Endothelial cell of umbilical vein (primary cell): ENCODE measurements at regions of chr17 and their contacts with region 1.

Region 1: DNA sequence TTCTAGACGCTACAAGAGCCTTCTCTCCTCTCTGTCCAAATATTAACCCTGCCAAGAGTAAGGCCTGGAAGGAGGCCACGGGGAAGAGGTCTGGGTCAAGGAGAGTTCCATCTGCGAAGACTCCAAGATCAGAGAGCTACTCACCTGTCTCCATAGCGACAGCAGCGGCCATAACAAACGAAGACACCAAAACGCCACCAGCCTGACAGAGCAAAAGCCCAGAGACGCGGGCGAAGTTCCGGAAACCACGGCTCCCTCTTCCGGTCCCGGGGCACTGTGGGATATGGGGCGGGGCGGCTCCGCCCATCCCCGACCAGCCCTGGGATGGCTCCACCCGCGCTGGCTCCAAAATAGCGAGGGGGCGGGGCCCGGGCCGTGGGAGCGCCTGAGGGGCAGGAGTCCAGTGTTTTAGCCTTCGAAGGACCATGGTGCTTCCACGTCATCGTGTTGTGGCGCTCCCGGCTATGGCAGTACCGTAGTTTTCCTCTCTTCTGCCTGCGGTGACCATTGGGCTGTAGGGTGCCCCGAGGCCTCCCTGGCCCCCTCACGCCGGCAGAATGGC is at the starts of genes C17orf100 and MED31:
- DNase-seq: peak; percentile 88
- H3K4me3 ChIP-seq: peak within 1 kb of the TSS; percentile 94 to 99 (median 96)
- H3K27ac ChIP-seq: peak within 1 kb of the TSS; percentile 98
- H3K4me1 ChIP-seq: peaks cover 12% of the 10 kb centered on the region
- H3K27me3 ChIP-seq: peaks cover 31 to 38% of the 10 kb centered on the region in 2 experiments
- CTCF ChIP-seq: no peak
- POLR2A ChIP-seq: peak; percentile 95
- total RNA-seq, gene C17orf100: 1.4 and 1.6 TPM in 2 replicates
- total RNA-seq, gene MED31: 28.0 and 29.4 TPM in 2 replicates

Region 2: DNA sequence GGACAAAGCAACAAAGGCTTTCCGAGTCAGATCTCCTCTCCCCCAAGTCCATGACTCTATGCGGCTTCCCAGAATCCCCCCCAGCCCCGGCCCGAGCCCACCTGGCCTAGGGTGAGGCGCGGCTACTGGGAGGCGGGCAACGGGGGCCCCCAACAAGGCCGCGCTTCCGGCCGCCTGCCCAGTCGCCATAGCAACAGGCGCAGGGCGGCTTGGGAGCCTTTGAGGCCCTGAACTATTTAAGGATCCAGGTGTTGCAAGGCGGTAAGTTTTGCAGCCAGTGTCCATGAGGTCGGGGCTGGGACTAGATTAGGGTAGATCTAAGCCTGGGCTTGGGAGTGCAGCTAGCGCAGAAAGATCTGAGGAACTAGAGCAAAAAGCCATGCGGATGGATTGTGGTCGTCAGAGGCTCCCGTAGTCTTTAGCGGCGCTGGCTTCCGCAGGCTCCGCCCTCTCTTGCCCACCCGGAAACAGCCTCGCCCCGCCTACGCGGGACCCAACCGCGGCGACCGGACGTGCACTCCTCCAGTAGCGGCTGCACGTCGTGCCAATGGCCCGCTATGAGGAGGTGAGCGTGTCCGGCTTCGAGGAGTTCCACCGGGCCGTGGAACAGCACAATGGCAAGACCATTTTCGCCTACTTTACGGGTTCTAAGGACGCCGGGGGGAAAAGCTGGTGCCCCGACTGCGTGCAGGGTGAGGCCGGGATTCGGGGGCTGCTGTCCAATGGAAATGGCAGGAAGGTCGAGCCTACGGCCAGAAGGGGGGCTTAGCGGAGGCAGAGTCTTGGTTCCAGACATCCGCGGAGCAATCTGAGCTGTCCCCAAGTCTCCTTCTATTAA is 10.7 kb before region 1 on chr17 and contains the starts of genes KIAA0753 and TXNDC17:
- CTCF ChIA-PET with region 1: no interaction called
- POLR2A ChIA-PET with region 1: no interaction called
- dilution Hi-C with region 1: no loop called
- intact Hi-C with region 1: loop called (anchors 1 kb)
- DNase-seq: peak; percentile 96
- H3K4me3 ChIP-seq: peak within 1 kb of the TSS; percentile 44 to 86 (median 70)
- H3K27ac ChIP-seq: peak within 1 kb of the TSS; percentile 83
- H3K4me1 ChIP-seq: peaks cover 15% of the 10 kb centered on the region
- H3K27me3 ChIP-seq: no peaks in the 10 kb centered on the region
- CTCF ChIP-seq: no peak
- POLR2A ChIP-seq: peak; percentile 98
- total RNA-seq, gene KIAA0753: 20.1 and 23.9 TPM in 2 replicates
- total RNA-seq, gene TXNDC17: 101 and 103 TPM in 2 replicates

Region 3: GRCh38 chr17:7014261-7014994 is 363.0 kb after region 1 on chr17:
- CTCF ChIA-PET with region 1: no interaction called
- POLR2A ChIA-PET with region 1: no interaction called
- dilution Hi-C with region 1: no loop called
- intact Hi-C with region 1: loop called (anchors 5 kb)
- DNase-seq: peak; percentile 99
- H3K4me3 ChIP-seq: peak overlapping the region; percentile 32 to 99 (median 93)
- H3K27ac ChIP-seq: peak overlapping the region; percentile 99
- H3K4me1 ChIP-seq: peaks cover 40% of the 10 kb centered on the region
- H3K27me3 ChIP-seq: no peaks in the 10 kb centered on the region
- CTCF ChIP-seq: peak; percentile 53 to 71
- POLR2A ChIP-seq: peak; percentile 80